Psoas muscle (tissue), 8 donors: ENCODE measurements at regions of chr2 and their contacts with region 1.

Region 1: GRCh38 chr2:157777427-157777826 is 98.7 kb downstream of the ACVR1 start:
- DNase-seq: peak in 1 of 2 donors; percentile 19
- ATAC-seq: peak in 2 of 4 donors; percentile 39 to 49
- H3K4me3 ChIP-seq: no peak overlapping the region
- H3K27ac ChIP-seq: no peak overlapping the region
- H3K4me1 ChIP-seq: peaks cover 27% of the 10 kb centered on the region
- H3K27me3 ChIP-seq: no peaks in the 10 kb centered on the region
- CTCF ChIP-seq: peak; percentile 75

Region 2: GRCh38 chr2:157509744-157510143 is 267.7 kb before region 1 on chr2:
- intact Hi-C with region 1: loop called in 1 of 2 experiments (anchors 10 kb)
- DNase-seq: no peak
- ATAC-seq: no peak
- H3K4me3 ChIP-seq: no peak overlapping the region
- H3K27ac ChIP-seq: no peak overlapping the region
- H3K4me1 ChIP-seq: no peaks in the 10 kb centered on the region
- H3K27me3 ChIP-seq: peaks cover 0 to 2% (median 0%) of the 10 kb centered on the region in 3 donors
- CTCF ChIP-seq: no peak

Region 3: GRCh38 chr2:157838442-157839161 is 61.2 kb after region 1 on chr2:
- intact Hi-C with region 1: loop called in 1 of 2 experiments (anchors 2 kb)
- DNase-seq: peak; percentile 50 to 72
- ATAC-seq: peak; percentile 88 to 92 (median 89)
- H3K4me3 ChIP-seq: peak overlapping the region; percentile 61
- H3K27ac ChIP-seq: peak overlapping the region; percentile 94
- H3K4me1 ChIP-seq: peaks cover 76% of the 10 kb centered on the region
- H3K27me3 ChIP-seq: no peaks in the 10 kb centered on the region
- CTCF ChIP-seq: no peak